Heart right ventricle (tissue), 16 donors: ENCODE measurements at regions of chr1 and their contacts with region 1.

Region 1: GRCh38 chr1:171434717-171435346 is 50.5 kb upstream of the PRRC2C start:
- DNase-seq: no peak
- ATAC-seq: peak; percentile 55 to 83 (median 74)
- H3K4me3 ChIP-seq: peak overlapping the region in 2 of 10 donors; percentile 9 to 10
- H3K27ac ChIP-seq: peak overlapping the region in 8 of 10 donors; percentile 18 to 84 (median 56)
- H3K4me1 ChIP-seq: peaks cover 0 to 12% (median 5%) of the 10 kb centered on the region in 9 donors
- H3K27me3 ChIP-seq: no peaks in the 10 kb centered on the region
- CTCF ChIP-seq: no peak

Region 2: GRCh38 chr1:170369000-170369399 is 1065.8 kb before region 1 on chr1:
- intact Hi-C with region 1: loop called in 1 of 10 experiments (anchors 5 kb)
- DNase-seq: no peak
- ATAC-seq: no peak
- H3K4me3 ChIP-seq: no peak overlapping the region
- H3K27ac ChIP-seq: no peak overlapping the region
- H3K4me1 ChIP-seq: no peaks in the 10 kb centered on the region
- H3K27me3 ChIP-seq: no peaks in the 10 kb centered on the region
- CTCF ChIP-seq: no peak